Activated T-helper 1 cell treated with anti-CD3 and anti-CD28 coated beads, Interleukin-12 subunit alpha, Interleukin-12 subunit beta, Interleukin-2, Interleukin-4 antibody, amounts not matched to agents 30 ng/mL and 10 ng/mL and 1 ng/mL, durations not matched to agents 14 hours and 24 hours and 36 hours (primary cell): ENCODE measurements at regions of chr3 and their contacts with region 1.

Region 1: GRCh38 chr3:69306239-69307185 is 79.4 kb downstream of the FRMD4B start:
- DNase-seq: peak; percentile 60
- H3K4me3 Mint-ChIP-seq: peak overlapping the region; percentile 55
- H3K27ac Mint-ChIP-seq: peak overlapping the region; percentile 58
- H3K4me1 Mint-ChIP-seq: peaks cover 30% of the 10 kb centered on the region
- H3K27me3 Mint-ChIP-seq: no peaks in the 10 kb centered on the region

Region 2: GRCh38 chr3:69120879-69121464 is 185.5 kb before region 1 on chr3:
- intact Hi-C with region 1: loop called (anchors 1 kb)
- DNase-seq: peak; percentile 71
- H3K4me3 Mint-ChIP-seq: no peak overlapping the region
- H3K27ac Mint-ChIP-seq: no peak overlapping the region
- H3K4me1 Mint-ChIP-seq: peaks cover 7% of the 10 kb centered on the region
- H3K27me3 Mint-ChIP-seq: peaks cover 7% of the 10 kb centered on the region

Region 3: DNA sequence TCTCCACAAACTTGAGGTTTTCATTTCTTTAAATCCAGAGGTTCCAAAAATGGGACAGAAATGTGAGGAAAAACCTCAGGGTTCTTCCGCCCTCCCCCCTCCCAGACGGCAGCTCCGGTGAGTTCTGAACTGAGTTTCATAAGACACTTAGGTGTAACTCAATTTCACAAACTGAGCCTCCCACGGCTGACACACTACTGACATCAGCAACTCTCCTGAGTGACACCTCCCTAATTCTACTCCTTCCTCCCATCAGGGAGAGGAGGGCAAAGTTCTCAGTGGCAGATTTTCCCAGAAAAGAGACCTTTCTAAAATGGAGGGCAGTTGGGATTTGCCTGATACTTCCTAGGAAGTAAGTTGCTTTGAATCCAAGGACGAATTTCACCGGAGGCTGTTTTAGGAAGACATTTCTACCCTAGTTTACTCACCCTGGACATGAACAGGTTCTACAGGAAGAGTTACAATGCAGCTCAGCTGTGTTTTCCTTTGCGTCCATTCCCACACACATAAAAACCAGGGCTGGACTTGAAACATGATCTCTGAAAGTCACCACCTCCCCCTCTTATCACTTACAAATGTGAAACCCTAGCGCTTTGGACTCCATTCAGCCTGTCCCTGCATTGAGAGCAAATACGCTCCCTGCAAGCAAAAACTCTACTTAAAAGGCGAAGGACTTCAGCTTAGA is 106.0 kb before region 1 on chr3:
- intact Hi-C with region 1: loop called (anchors 1 kb)
- DNase-seq: peak; percentile 36
- H3K4me3 Mint-ChIP-seq: peak overlapping the region; percentile 92
- H3K27ac Mint-ChIP-seq: peak overlapping the region; percentile 92
- H3K4me1 Mint-ChIP-seq: peaks cover 79% of the 10 kb centered on the region
- H3K27me3 Mint-ChIP-seq: no peaks in the 10 kb centered on the region

Region 4: GRCh38 chr3:69250014-69250413 is 56.5 kb before region 1 on chr3:
- intact Hi-C with region 1: loop called (anchors 2 kb)
- DNase-seq: peak; percentile 58
- H3K4me3 Mint-ChIP-seq: peak overlapping the region; percentile 71
- H3K27ac Mint-ChIP-seq: peak overlapping the region; percentile 86
- H3K4me1 Mint-ChIP-seq: peaks cover 28% of the 10 kb centered on the region
- H3K27me3 Mint-ChIP-seq: peaks cover 3% of the 10 kb centered on the region

Region 5: DNA sequence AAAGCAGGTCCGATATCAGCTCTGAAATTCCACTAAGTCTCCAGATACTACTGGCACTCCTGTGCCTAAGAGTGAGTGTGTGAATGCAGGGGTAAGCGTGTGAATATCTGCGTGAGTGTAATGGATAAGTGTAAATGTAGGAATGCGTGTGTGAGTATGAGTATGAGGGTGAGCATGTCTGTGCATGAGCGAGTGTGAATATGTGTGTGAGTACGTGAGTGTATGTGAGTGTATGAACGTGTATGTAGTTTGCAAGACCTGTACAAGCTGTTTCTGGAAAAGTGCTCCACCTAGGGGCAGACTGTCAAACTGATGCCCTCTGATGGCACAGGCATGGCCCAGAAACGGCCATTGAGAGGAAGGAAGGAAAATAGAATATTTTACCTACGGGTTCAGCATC is 103.7 kb after region 1 on chr3:
- intact Hi-C with region 1: loop called (anchors 1 kb)
- DNase-seq: peak; percentile 57
- H3K4me3 Mint-ChIP-seq: no peak overlapping the region
- H3K27ac Mint-ChIP-seq: no peak overlapping the region
- H3K4me1 Mint-ChIP-seq: peaks cover 11% of the 10 kb centered on the region
- H3K27me3 Mint-ChIP-seq: peaks cover 9% of the 10 kb centered on the region

Region 6: DNA sequence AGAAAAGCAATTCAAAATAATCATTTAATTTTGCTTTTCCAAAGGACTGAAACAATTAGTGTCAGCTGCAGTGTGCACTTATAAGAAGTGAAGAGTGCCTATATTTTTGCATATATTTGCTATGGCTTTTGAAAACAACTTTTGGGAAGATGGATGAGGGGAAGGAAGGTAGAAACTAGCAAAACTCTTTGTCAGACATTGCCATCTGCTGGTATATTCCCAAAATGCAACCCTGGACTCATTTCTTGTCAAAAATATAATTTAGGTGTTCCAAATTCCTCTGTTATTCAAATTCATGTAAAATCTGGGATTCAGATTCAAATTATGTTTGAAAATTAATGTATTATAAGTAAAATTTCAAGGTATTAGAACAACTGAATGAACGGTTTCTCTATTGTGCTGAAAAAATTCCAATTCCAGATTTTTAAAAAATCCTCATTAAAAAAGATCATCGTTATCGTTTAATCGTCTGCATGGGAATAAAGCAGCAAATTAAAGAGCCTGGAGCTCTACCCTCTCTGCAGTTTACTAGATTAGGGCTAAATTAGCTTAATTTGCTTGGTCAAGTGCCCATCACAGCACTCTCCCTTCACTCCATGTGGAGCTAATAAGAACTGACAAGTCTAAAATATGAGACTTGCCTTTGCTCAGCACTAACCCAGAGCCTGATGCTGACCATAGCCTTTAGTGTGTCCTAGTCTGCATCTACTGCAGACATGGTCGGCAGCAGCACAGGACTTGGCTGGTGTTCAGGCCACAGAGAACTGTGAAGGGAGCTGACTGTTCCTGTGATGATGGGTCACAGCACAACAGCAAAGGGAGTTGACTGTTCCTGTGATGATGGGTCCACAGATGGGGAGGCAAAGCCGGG is 364.8 kb after region 1 on chr3:
- intact Hi-C with region 1: loop called (anchors 1 kb)
- DNase-seq: no peak
- H3K4me3 Mint-ChIP-seq: no peak overlapping the region
- H3K27ac Mint-ChIP-seq: no peak overlapping the region
- H3K4me1 Mint-ChIP-seq: no peaks in the 10 kb centered on the region
- H3K27me3 Mint-ChIP-seq: no peaks in the 10 kb centered on the region